ENCODE measurements at regions of chr5 and their contacts with region 1.

Region 1: DNA sequence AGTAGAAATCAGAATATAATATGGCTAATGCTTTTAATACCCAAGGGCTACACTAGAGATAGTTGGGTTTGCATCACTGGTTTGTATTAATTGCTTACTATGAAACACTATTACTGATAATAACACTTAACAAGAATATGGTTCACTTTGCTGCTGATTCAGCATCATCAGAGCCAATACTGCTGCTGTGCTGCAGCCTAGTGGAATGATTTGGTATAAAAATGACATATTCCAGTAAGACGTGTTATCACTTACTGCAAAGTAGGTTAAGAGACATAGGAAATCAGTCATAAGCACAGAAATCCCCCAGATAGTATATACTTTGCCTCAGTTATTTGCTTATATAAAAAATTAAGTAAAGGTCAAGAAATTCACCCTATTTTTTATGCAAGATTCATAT is 2.8 kb downstream of the CDH10 start:
- DNase-seq: no peak
- ATAC-seq: no peak
- H3K4me3 ChIP-seq: no peak overlapping the region
- H3K27ac ChIP-seq: no peak overlapping the region
- H3K4me1 ChIP-seq: peaks cover 0 to 3% (median 0%) of the 10 kb centered on the region in 9 donors
- H3K27me3 ChIP-seq: peaks cover 0 to 37% (median 11%) of the 10 kb centered on the region in 7 donors
- CTCF ChIP-seq: peak in 7 of 9 donors; percentile 15 to 54 (median 43)

Region 2: DNA sequence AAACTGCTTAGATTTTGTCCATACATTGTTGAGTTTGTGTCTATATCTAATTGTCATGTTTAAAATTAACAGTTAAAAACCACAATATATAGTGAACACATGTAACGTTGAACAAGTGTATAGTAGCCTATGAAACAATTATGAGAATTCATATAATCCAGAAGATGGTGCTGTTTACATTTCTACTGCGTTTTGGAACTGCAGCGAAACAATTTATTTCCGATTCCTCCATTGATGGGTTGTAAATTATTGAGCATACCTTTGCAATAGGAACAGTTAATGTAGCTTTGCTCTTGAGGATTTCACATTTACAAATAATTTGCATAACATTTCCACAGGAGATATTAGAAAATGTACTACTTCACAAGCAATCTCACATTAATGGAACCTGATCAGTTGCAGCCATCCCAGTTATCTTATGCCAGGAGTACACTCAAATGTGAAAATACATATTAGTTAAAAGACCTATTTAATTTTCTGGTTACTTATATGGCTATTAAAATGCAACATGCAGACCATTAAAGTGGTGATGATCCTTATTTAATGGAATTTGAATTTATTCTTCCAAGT is 409.0 kb before region 1 on chr5:
- intact Hi-C with region 1: loop called in 1 of 10 experiments (anchors 5 kb)
- DNase-seq: no peak
- ATAC-seq: no peak
- H3K4me3 ChIP-seq: no peak overlapping the region
- H3K27ac ChIP-seq: no peak overlapping the region
- H3K4me1 ChIP-seq: no peaks in the 10 kb centered on the region
- H3K27me3 ChIP-seq: no peaks in the 10 kb centered on the region
- CTCF ChIP-seq: peak in 5 of 9 donors; percentile 17 to 27 (median 20)

Region 3: DNA sequence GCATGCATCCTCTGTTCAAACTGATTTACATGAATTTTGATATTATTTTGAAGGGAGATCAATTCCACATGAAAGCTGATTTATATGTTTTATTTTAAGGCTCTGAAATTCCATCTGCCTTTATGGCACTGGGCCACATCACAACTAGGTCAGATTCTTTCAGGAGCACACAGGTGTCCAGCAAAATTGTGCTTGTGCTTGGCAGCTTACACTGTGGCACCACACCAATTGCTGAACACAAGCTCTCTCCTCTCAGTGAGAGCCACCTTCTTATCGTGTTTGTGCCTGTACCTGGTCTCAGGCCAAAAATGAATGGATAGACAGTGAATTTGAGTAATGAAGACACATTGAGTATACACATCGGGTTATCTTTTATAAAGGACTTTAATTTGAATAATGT is 197.6 kb before region 1 on chr5:
- intact Hi-C with region 1: loop called in 3 of 10 experiments (anchors 10 kb)
- DNase-seq: peak in 1 of 2 donors; percentile 6
- ATAC-seq: peak in 6 of 8 donors; percentile 48 to 72 (median 60)
- H3K4me3 ChIP-seq: no peak overlapping the region
- H3K27ac ChIP-seq: no peak overlapping the region
- H3K4me1 ChIP-seq: no peaks in the 10 kb centered on the region
- H3K27me3 ChIP-seq: no peaks in the 10 kb centered on the region
- CTCF ChIP-seq: no peak

Region 4: DNA sequence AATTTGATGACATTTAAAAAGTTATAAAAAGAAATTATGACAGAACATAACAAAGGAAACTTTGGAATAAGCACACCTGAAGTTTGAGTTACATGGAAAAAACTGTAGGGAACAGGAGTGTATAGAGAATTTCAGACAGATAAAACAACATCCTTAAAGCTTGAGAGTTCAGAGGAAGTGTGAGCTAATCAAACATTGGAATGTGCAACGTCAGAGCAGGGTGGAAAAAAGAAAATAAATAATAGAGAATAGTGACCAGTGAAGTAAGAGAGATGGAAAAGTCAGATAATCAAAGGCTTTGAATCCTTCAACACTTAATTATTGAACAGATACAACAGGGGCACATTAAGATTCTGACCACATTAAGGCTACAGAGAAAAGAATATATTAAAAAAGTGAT is 131.2 kb after region 1 on chr5:
- intact Hi-C with region 1: no loop called
- DNase-seq: no peak
- ATAC-seq: no peak
- H3K4me3 ChIP-seq: no peak overlapping the region
- H3K27ac ChIP-seq: no peak overlapping the region
- H3K4me1 ChIP-seq: no peaks in the 10 kb centered on the region
- H3K27me3 ChIP-seq: no peaks in the 10 kb centered on the region
- CTCF ChIP-seq: no peak

Measured in heart right ventricle (tissue), 16 donors.